Caco-2 (cell line): ENCODE measurements at regions of chr18 and their contacts with region 1.

Region 1: GRCh38 chr18:65725251-65726050 is 25.4 kb upstream of the CDH7 start:
- DNase-seq: peak; percentile 35 to 48
- H3K4me3 ChIP-seq: no peak overlapping the region
- H3K4me3 Mint-ChIP-seq: no peak overlapping the region
- H3K27ac Mint-ChIP-seq: no peak overlapping the region
- H3K4me1 ChIP-seq: no peaks in the 10 kb centered on the region
- H3K4me1 Mint-ChIP-seq: no peaks in the 10 kb centered on the region
- H3K27me3 ChIP-seq: no peaks in the 10 kb centered on the region
- H3K27me3 Mint-ChIP-seq: peaks cover 6% of the 10 kb centered on the region
- CTCF ChIP-seq: peak in 1 of 2 experiments; percentile 48

Region 2: DNA sequence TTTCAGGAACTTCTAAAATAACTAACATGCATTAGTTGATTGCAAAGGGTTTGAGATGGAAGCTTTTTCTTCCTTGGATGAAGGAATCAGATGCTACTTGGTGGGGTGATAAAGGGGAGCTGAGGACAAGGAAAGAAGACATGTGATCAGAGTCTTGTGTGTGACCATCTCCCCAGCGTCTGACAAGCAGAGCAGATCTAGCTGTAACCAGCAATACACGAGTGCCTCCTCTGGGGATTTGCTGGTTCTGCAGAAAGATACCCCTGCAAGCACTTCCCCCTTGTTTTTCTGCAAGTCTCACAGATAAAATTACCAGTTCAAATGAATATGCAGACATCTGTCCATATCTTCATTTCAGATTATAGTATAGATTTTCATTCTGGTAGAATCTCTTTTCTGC is 28.1 kb after region 1 on chr18:
- CTCF ChIA-PET with region 1: interaction called, 5 read pairs
- POLR2A ChIA-PET with region 1: no interaction called
- intact Hi-C with region 1: loop called (anchors 1 kb)
- DNase-seq: peak in 1 of 2 experiments; percentile 18
- H3K4me3 ChIP-seq: no peak overlapping the region
- H3K4me3 Mint-ChIP-seq: no peak overlapping the region
- H3K27ac Mint-ChIP-seq: no peak overlapping the region
- H3K4me1 ChIP-seq: no peaks in the 10 kb centered on the region
- H3K4me1 Mint-ChIP-seq: no peaks in the 10 kb centered on the region
- H3K27me3 ChIP-seq: no peaks in the 10 kb centered on the region
- H3K27me3 Mint-ChIP-seq: no peaks in the 10 kb centered on the region
- CTCF ChIP-seq: peak in 1 of 2 experiments; percentile 46

Region 3: DNA sequence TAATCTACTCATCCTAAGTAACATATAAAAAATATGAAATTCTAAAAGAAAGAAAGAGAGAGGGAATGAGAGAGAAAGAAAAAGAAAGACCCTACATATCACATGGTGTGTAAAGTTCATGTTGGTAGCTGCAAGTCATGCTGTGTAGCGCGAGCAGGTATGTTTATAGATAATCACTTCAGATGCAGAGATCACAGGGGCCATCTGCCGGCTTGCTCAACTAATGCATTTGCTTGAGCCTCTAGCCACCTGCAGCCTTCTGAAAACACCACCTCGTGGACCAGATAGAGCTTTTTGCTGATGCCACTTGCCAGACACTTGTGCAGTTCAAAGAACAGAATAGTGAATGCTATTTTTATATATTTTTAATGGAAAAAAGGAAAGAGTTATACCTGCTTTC is 62.9 kb after region 1 on chr18:
- CTCF ChIA-PET with region 1: interaction called, 15 read pairs
- POLR2A ChIA-PET with region 1: no interaction called
- intact Hi-C with region 1: loop called (anchors 1 kb)
- DNase-seq: peak; percentile 34 to 38
- H3K4me3 ChIP-seq: no peak overlapping the region
- H3K4me3 Mint-ChIP-seq: no peak overlapping the region
- H3K27ac Mint-ChIP-seq: no peak overlapping the region
- H3K4me1 ChIP-seq: no peaks in the 10 kb centered on the region
- H3K4me1 Mint-ChIP-seq: no peaks in the 10 kb centered on the region
- H3K27me3 ChIP-seq: no peaks in the 10 kb centered on the region
- H3K27me3 Mint-ChIP-seq: no peaks in the 10 kb centered on the region
- CTCF ChIP-seq: peak; percentile 17 to 41

Region 4: DNA sequence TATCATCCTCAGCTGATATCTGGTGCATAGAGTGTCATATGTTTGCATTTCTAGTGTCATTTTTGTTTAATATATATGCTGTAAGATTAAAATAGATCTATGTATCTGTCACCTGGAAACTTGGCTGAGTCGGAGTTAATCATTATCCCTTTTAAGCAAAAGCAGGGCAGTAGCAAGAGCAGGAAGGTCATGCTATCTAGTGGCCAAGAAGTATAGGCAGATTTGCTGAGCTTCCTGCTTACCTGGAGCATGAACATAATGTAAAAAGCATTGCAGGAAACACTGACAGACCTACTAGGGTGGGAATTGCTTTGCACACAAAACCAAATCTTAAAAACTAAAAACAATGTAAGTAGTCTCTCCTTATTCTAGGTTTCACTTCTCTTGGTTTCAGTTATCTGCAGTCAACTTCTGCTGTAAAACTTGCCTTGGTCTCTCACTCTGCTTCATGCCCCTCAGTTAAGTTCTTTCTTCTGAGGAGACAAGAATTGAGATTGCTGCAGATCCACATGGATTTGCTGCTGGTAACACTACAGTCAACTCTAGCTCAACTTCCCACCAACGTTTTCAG is 320.7 kb after region 1 on chr18:
- CTCF ChIA-PET with region 1: no interaction called
- POLR2A ChIA-PET with region 1: no interaction called
- intact Hi-C with region 1: loop called (anchors 1 kb)
- DNase-seq: peak in 1 of 2 experiments; percentile 4
- H3K4me3 ChIP-seq: no peak overlapping the region
- H3K4me3 Mint-ChIP-seq: no peak overlapping the region
- H3K27ac Mint-ChIP-seq: no peak overlapping the region
- H3K4me1 ChIP-seq: no peaks in the 10 kb centered on the region
- H3K4me1 Mint-ChIP-seq: no peaks in the 10 kb centered on the region
- H3K27me3 ChIP-seq: no peaks in the 10 kb centered on the region
- H3K27me3 Mint-ChIP-seq: no peaks in the 10 kb centered on the region
- CTCF ChIP-seq: peak in 1 of 2 experiments; percentile 26

Region 5: DNA sequence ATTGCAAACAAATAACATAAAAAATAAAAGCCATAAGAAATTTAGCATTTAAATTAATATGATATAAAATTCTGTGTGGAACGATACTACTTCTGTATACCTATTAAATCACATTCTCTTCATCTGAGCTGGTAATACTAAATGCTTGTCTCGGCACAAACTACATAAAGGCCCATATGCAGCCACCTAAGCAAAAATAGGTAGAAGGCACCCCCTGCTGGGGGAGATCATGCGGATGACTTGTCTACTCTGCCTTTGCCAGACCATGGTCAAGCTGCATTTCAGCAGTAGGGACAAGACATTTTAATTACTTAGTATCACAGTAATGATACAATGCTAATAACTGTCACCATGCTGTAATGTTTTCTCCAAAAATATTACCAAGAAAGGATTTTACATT is 770.4 kb after region 1 on chr18:
- CTCF ChIA-PET with region 1: no interaction called
- POLR2A ChIA-PET with region 1: no interaction called
- intact Hi-C with region 1: loop called (anchors 10 kb)
- DNase-seq: peak; percentile 42 to 68
- H3K4me3 ChIP-seq: no peak overlapping the region
- H3K4me3 Mint-ChIP-seq: no peak overlapping the region
- H3K27ac Mint-ChIP-seq: no peak overlapping the region
- H3K4me1 ChIP-seq: no peaks in the 10 kb centered on the region
- H3K4me1 Mint-ChIP-seq: no peaks in the 10 kb centered on the region
- H3K27me3 ChIP-seq: no peaks in the 10 kb centered on the region
- H3K27me3 Mint-ChIP-seq: no peaks in the 10 kb centered on the region
- CTCF ChIP-seq: peak; percentile 32 to 50